Activated CD8-positive, alpha-beta T cell treated with anti-CD3 and anti-CD28 coated beads for 36 hours (primary cell): ENCODE measurements at regions of chr6 and their contacts with region 1.

Region 1: DNA sequence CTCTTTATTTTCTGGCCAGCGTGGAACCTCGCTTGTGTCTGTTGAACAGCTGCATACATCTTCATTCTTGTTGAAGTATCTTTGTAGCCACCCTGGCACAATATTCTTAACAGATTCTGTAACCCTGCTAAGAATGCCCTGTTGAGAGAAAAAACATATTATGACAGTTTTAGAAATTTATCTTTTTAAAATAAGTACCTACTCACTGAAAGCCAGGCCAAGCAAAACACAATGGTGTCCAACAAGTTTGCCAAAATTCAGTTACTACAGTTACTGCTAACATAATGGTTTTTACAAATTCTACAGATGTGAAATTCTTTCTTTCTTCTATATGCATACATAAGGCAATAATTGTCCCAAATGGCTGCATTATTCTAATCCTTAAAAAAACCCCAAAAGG is 18.2 kb downstream of the NUP153 start:
- DNase-seq: no peak
- ATAC-seq: no peak
- H3K4me3 Mint-ChIP-seq: no peak overlapping the region
- H3K27ac Mint-ChIP-seq: no peak overlapping the region
- H3K4me1 Mint-ChIP-seq: peaks cover 53% of the 10 kb centered on the region
- H3K27me3 Mint-ChIP-seq: no peaks in the 10 kb centered on the region
- CTCF ChIP-seq: no peak

Region 2: DNA sequence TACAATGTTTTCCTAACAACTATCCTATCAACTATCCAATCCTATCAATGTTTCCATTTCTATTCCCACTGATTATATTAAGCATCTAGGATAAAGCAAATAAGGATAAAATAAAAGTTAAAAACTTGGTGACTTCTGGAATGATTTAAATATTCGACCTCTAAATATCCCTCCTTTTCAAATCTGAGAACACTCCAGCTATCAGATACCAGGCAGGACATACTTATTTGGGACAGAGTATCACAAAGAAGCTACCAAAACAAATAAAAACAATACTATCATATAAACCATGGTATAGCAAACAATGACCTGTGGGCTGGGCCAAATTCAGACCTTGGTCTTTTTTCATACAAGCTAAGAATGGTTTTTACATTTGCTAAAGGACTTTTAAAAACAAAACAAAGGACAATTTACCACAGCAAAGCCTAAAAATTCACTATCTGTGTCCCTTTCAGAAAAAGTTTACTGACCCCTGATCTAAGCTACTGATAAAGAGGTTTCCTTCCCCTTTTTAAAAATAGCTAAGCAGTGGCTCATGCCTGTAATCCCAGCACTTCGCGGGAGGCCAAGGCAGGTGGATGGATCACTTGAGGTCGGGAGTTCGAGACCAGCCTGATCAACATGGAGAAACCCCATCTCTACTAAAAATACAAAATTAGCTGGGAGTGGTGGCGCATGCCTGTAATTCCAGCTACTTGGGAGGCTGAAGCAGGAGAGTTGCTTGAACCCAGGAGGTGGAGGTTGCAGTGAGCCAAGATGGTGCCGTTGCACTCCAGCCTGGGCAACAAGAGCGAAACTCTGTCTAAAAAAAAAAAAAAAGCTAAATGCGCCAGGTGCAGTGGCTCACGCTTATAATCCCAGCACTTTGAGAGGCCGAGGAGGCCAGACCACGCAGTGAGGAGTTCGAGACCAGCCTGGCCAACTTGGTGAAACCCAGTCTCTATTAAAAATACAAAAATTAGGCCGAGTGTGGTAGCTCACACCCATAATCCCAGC is 12.2 kb after region 1 on chr6:
- CTCF ChIA-PET with region 1: interaction called, 26 read pairs
- POLR2A ChIA-PET with region 1: interaction called, 32 read pairs
- intact Hi-C with region 1: no loop called
- DNase-seq: no peak
- ATAC-seq: no peak
- H3K4me3 Mint-ChIP-seq: peak overlapping the region; percentile 12
- H3K27ac Mint-ChIP-seq: peak overlapping the region; percentile 68
- H3K4me1 Mint-ChIP-seq: peaks cover 41% of the 10 kb centered on the region
- H3K27me3 Mint-ChIP-seq: no peaks in the 10 kb centered on the region
- CTCF ChIP-seq: no peak

Region 3: GRCh38 chr6:17714879-17715851 is 26.7 kb after region 1 on chr6:
- CTCF ChIA-PET with region 1: no interaction called
- POLR2A ChIA-PET with region 1: no interaction called
- intact Hi-C with region 1: no loop called
- DNase-seq: peak; percentile 69
- ATAC-seq: peak; percentile 94
- H3K4me3 Mint-ChIP-seq: peak overlapping the region; percentile 37
- H3K27ac Mint-ChIP-seq: peak overlapping the region; percentile 90
- H3K4me1 Mint-ChIP-seq: peaks cover 15% of the 10 kb centered on the region
- H3K27me3 Mint-ChIP-seq: no peaks in the 10 kb centered on the region
- CTCF ChIP-seq: no peak